Dorsolateral prefrontal cortex (tissue), 120 donors: ENCODE measurements at regions of chr18 and their contacts with region 1.

Region 1: DNA sequence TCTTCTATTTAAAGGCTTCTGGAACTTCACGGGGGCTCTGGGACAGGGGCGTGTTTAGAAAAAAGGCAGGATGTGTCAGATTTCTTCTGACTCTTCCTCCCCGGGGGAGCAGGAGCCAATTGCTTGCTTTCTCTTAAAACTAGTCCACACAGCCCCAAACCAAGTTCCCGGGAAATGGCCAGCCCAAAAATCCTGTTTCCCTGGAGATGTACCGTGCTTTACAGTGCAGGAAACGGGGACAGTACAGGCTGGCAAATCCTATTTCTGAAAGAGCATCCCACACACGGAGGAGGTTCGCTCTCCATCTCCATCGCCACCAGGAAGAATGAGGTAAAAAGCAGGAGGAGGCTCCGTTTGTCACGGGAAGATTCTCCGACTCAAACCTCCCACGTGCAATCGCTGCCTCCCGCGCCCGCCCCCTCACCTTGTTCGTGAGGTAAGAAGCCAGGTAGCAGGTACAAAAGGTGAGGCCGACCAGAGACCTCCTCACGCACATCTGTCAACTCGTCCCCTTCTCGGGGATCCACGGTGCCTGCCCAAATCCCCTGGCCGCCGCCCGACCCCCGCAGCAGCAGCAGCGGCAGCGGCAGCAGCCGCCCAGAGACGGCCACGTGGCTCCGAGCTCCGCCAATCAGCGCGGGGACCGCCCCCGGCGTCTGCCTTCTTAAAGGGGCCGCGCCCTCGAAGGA is 15.6 kb upstream of the RIOK3 start:
- DNase-seq: peak; percentile 88 to 95 (median 90)
- H3K4me3 ChIP-seq: peak overlapping the region; percentile 57 to 93 (median 80)
- H3K27ac ChIP-seq: peak overlapping the region in 53 of 59 donors; percentile 17 to 92 (median 74)
- H3K27me3 ChIP-seq: no peaks in the 10 kb centered on the region
- CTCF ChIP-seq: peak in 4 of 56 donors; percentile 12 to 32 (median 22)

Region 2: GRCh38 chr18:22921772-22922171 is 515.7 kb before region 1 on chr18:
- intact Hi-C with region 1: loop called in 1 of 2 experiments (anchors 10 kb)
- DNase-seq: no peak
- H3K4me3 ChIP-seq: no peak overlapping the region
- H3K27ac ChIP-seq: no peak overlapping the region
- H3K27me3 ChIP-seq: no peaks in the 10 kb centered on the region
- CTCF ChIP-seq: no peak

Region 3: GRCh38 chr18:23452728-23453679 is 15.5 kb after region 1 on chr18 and contains the start of gene RIOK3:
- intact Hi-C with region 1: loop called in 1 of 2 experiments (anchors 2 kb)
- DNase-seq: peak; percentile 97 to 99 (median 99)
- H3K4me3 ChIP-seq: peak within 1 kb of the TSS; percentile 70 to 100 (median 94)
- H3K27ac ChIP-seq: peak within 1 kb of the TSS; percentile 57 to 98 (median 92)
- H3K27me3 ChIP-seq: no peaks in the 10 kb centered on the region
- CTCF ChIP-seq: peak in 29 of 56 donors; percentile 9 to 59 (median 33)
- total RNA-seq, gene RIOK3: 25.5 to 71.7 (median 52.1) TPM